Dorsolateral prefrontal cortex (tissue), 120 donors: ENCODE measurements at regions of chr6 and their contacts with region 1.

Region 1: GRCh38 chr6:68778356-68779020 is 143.4 kb downstream of the ADGRB3 start:
- DNase-seq: peak in 6 of 10 donors; percentile 25 to 67 (median 54)
- H3K4me3 ChIP-seq: peak overlapping the region in 52 of 59 donors; percentile 3 to 61 (median 36)
- H3K27ac ChIP-seq: peak overlapping the region; percentile 60 to 98 (median 87)
- H3K27me3 ChIP-seq: no peaks in the 10 kb centered on the region
- CTCF ChIP-seq: peak; percentile 56 to 98 (median 87)

Region 2: GRCh38 chr6:68572525-68572924 is 206.0 kb before region 1 on chr6:
- intact Hi-C with region 1: loop called in 1 of 2 experiments (anchors 10 kb)
- DNase-seq: peak in 1 of 10 donors; percentile 5
- H3K4me3 ChIP-seq: no peak overlapping the region
- H3K27ac ChIP-seq: no peak overlapping the region
- H3K27me3 ChIP-seq: no peaks in the 10 kb centered on the region
- CTCF ChIP-seq: peak in 34 of 56 donors; percentile 9 to 66 (median 30)

Region 3: DNA sequence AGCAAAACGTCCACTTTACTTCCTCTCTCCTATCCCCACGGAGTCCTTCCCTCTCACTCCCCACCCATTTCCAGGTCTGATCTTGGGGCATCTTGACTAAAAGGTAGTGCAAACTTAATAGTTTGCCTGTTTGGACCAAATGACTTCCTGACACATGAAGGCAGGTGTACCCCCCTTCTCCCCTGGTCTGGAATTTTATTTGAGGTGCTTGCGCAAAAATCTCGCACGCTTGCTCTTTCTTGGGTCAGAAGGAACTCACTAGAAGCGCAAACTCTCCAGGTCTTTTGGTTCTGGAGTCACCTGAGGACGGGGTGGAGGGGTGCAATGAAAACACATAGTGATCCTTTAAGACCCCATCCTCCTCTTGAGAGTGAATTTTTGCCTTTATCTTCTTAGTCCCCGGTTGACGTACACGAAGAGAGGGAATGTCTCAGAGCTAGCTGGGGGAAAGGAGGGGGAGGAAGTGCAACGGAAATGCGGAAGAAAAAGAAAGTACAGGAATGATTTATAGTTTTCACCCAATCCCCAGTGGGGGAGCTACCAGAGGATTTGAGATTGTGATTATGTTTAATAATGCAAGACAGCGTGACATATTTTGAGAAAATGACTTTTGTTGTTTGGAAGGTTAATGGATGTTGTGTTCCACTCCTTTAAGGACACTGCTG is 138.5 kb before region 1 on chr6:
- intact Hi-C with region 1: loop called (anchors 1 kb)
- DNase-seq: peak in 1 of 10 donors; percentile 41
- H3K4me3 ChIP-seq: peak overlapping the region; percentile 66 to 96 (median 83)
- H3K27ac ChIP-seq: peak overlapping the region; percentile 55 to 99 (median 97)
- H3K27me3 ChIP-seq: no peaks in the 10 kb centered on the region
- CTCF ChIP-seq: peak in 4 of 56 donors; percentile 4 to 37 (median 12)

Region 4: GRCh38 chr6:68677058-68677457 is 101.4 kb before region 1 on chr6:
- intact Hi-C with region 1: no loop called
- DNase-seq: no peak
- H3K4me3 ChIP-seq: no peak overlapping the region
- H3K27ac ChIP-seq: peak overlapping the region in 1 of 59 donors; percentile 31
- H3K27me3 ChIP-seq: no peaks in the 10 kb centered on the region
- CTCF ChIP-seq: no peak

Region 5: GRCh38 chr6:68728159-68728979 is 50.1 kb before region 1 on chr6:
- intact Hi-C with region 1: loop called (anchors 5 to 10 kb)
- DNase-seq: no peak
- H3K4me3 ChIP-seq: peak overlapping the region in 4 of 59 donors; percentile 49 to 66 (median 53)
- H3K27ac ChIP-seq: peak overlapping the region in 58 of 59 donors; percentile 0 to 92 (median 81)
- H3K27me3 ChIP-seq: no peaks in the 10 kb centered on the region
- CTCF ChIP-seq: no peak

Region 6: DNA sequence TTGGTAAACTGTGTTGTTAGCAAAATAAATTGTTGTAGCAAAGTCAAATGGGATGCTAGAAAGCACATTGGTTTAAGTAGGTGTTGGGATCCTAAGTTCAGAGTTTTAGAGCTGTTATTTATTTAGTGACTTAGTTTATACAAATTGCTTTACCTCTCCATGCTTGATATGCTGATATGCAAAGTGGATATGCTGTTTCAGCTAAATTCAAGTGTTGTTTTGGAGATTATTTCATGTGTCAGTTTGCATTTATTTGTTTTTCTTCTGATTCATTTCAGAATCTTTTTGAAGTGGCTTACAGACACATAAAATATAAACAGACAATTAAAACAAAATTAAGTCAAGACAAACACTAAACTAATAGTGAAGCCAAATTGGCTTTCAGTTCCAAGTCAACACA is 60.1 kb after region 1 on chr6:
- intact Hi-C with region 1: no loop called
- DNase-seq: no peak
- H3K4me3 ChIP-seq: no peak overlapping the region
- H3K27ac ChIP-seq: peak overlapping the region in 6 of 59 donors; percentile 4 to 36 (median 14)
- H3K27me3 ChIP-seq: no peaks in the 10 kb centered on the region
- CTCF ChIP-seq: no peak

Region 7: DNA sequence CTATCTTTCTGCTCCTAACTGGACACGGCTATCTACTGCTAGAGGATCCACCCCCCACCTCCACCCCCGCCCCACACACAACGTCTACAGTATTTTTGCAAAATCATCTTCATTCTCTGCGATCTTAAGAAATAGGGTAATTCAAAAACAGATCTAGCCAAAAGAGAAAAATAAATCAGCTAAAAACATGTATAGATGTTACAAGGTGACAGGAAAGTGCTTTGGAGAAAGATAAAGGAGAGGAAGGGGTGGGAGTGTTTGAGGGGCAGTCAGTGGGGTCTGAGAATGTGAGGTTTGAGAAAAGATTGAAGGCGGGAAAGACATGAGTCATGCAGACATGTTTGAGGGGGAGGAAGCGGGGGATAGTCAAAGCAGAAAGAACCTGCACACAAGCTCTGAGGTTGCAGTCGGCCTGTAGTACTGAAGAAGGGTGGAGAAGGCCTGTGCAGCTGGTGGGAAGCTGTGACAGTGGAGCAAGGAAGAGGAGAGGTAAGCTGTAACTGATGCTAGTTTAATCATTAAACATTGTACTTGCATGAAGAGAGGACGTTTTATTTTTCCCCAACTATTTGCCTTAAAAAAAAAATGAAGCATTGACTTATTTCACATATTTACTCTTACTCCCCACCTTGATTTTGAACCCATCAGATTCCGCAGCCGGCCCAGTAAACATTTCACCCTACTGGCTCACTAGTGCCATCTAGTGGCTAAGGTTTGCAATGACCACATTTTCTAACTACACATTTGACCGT is 189.2 kb after region 1 on chr6:
- intact Hi-C with region 1: loop called in 1 of 2 experiments (anchors 10 kb)
- DNase-seq: peak in 8 of 10 donors; percentile 38 to 59 (median 52)
- H3K4me3 ChIP-seq: peak overlapping the region in 2 of 59 donors; percentile 1 to 15
- H3K27ac ChIP-seq: peak overlapping the region in 34 of 59 donors; percentile 1 to 70 (median 32)
- H3K27me3 ChIP-seq: no peaks in the 10 kb centered on the region
- CTCF ChIP-seq: peak; percentile 70 to 97 (median 90)